GM10248 (cell line): ENCODE measurements at regions of chrX and their contacts with region 1.

Region 1: GRCh38 chrX:110156167-110156754 is 153.3 kb downstream of the TMEM164 start:
- DNase-seq: no peak
- CTCF ChIP-seq: peak; percentile 9

Region 2: GRCh38 chrX:110036162-110037033 is 119.9 kb before region 1 on chrX:
- CTCF ChIA-PET with region 1: no interaction called
- POLR2A ChIA-PET with region 1: no interaction called
- DNase-seq: no peak
- CTCF ChIP-seq: no peak

Region 3: GRCh38 chrX:110167952-110168451 is 11.7 kb after region 1 on chrX:
- CTCF ChIA-PET with region 1: interaction called, 22 read pairs
- POLR2A ChIA-PET with region 1: no interaction called
- DNase-seq: peak; percentile 47
- CTCF ChIP-seq: peak; percentile 52

Region 4: GRCh38 chrX:110174981-110175421 is 18.7 kb after region 1 on chrX:
- CTCF ChIA-PET with region 1: interaction called, 22 read pairs
- POLR2A ChIA-PET with region 1: no interaction called
- DNase-seq: no peak
- CTCF ChIP-seq: no peak

Region 5: DNA sequence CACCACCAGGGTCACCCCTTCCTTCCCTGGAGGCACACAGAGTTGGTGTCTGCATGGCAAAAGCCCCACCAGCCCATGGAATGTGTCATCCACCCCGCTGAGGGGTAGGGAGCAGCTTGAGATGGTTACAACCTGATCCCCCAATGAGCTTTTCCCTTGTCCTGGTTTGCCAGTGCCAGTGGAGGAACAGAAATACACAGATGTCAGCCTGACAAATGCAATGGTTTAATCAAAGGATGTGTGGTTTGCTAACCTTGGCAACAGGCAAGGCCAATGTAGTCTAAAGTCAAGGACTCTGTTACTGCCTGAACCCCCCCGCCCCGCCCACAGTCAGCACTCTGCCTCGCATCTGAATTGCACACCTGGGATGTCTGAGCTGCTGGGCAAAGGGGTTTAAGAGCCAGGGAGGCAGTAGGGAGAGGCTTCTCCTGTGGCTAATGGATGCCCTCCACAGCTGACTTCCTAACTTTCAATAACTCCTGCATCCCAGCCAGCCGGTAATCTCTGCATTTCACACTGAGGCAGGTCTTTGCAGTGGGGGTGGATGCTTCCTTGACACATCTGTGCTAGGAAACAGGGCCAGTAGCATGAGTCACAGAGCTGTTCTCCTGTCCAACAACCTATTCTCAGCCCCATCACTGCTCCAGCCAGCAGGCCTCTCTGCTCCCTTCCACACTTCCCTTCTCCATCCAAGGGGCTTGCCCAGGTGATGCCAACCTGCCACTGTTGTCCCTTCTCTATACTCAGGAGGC is 24.1 kb after region 1 on chrX:
- CTCF ChIA-PET with region 1: interaction called, 14 read pairs
- POLR2A ChIA-PET with region 1: no interaction called
- DNase-seq: no peak
- CTCF ChIP-seq: no peak

Region 6: DNA sequence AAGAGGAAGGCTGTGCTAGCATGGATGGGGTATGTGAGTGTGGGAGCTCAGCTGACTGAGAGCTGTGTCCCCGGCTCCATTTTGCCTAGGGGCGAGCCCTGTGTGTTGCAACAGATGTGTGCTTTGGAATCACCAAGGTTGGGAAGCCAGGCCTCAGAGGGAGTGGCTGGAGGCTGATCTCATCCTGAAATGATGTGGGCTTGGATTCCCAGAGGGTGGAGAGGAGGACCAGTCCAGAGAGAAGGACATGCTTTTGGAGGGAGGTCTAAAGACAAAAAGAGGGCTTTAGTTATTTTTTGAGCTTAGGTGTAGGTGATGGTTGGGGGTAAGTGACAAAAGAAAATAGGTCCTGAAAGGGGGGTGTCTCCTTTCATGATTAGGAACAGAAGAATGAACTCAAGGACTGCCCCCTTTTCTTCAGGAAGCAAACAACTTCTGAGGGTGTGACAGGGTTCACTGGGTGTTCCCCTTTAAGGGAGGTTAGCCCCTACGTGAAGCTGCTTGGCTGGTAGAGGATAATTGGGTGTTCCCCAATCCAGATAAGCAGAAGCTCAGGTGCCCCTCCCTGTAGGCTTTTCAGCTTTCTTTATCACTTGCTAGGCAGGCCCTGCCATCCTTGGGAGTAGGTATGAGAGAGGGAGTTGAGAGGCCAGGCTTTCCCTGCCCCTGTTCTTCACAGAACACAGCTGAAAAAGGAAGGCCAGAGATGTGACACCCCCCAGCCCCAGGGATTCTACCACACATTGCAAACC is 246.4 kb after region 1 on chrX:
- CTCF ChIA-PET with region 1: interaction called, 450 read pairs
- POLR2A ChIA-PET with region 1: no interaction called
- DNase-seq: no peak
- CTCF ChIP-seq: no peak